Vagina (tissue), 2 donors: ENCODE measurements at regions of chr4 and their contacts with region 1.

Region 1: GRCh38 chr4:105146276-105147015 is at the start of gene TET2:
- DNase-seq: peak; percentile 90 to 96
- H3K4me3 ChIP-seq: peak within 1 kb of the TSS; percentile 68 to 82
- H3K27ac ChIP-seq: peak within 1 kb of the TSS; percentile 90
- H3K4me1 ChIP-seq: peaks cover 33% of the 10 kb centered on the region
- H3K27me3 ChIP-seq: no peaks in the 10 kb centered on the region
- CTCF ChIP-seq: no peak
- POLR2A ChIP-seq: no peak
- total RNA-seq, gene TET2: 31.9 TPM

Region 2: DNA sequence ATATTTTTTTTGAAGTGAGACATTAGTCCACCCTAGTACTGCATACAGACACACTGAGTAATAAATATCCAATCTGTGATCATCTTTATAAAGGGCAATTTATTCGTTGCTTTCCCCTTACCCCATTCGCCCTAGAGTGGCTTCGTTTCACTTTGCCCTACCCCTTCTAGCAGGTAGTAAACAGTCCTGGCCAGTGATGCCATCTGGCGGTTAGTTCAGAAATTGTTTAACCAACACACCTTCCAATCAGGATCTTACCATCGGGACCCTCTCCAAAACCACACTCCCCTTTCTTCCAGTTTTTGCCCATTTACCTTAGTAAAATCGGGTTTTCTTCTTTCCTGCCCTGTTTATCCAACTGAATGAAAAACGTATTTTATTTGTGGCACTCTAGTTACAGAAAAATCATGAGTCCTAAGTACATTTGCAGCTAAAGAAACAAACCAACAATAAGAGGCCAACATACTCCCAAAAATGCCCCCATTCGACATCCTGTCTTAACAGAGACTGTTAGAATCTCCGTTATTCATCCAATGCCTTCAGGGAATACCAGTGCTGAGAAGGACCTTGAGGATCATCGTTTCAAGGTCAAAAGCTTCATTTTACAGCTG is 325.2 kb after region 1 on chr4:
- intact Hi-C with region 1: loop called (anchors 5 kb)
- DNase-seq: no peak
- H3K4me3 ChIP-seq: peak overlapping the region; percentile 10 to 91
- H3K27ac ChIP-seq: peak overlapping the region; percentile 97
- H3K4me1 ChIP-seq: peaks cover 35% of the 10 kb centered on the region
- H3K27me3 ChIP-seq: no peaks in the 10 kb centered on the region
- CTCF ChIP-seq: peak; percentile 46 to 81 (median 69)
- POLR2A ChIP-seq: no peak